Psoas muscle (tissue), 8 donors: ENCODE measurements at regions of chr1 and their contacts with region 1.

Region 1: GRCh38 chr1:51616901-51617708 is at the start of gene OSBPL9:
- DNase-seq: peak; percentile 89 to 94
- ATAC-seq: peak; percentile 81 to 89 (median 82)
- H3K4me3 ChIP-seq: peak within 1 kb of the TSS; percentile 90
- H3K27ac ChIP-seq: peak within 1 kb of the TSS; percentile 97
- H3K4me1 ChIP-seq: peaks cover 43% of the 10 kb centered on the region
- H3K27me3 ChIP-seq: no peaks in the 10 kb centered on the region
- CTCF ChIP-seq: no peak
- total RNA-seq, gene OSBPL9: 32.5 to 141 (median 52.0) TPM

Region 2: GRCh38 chr1:51423073-51423821 is 193.9 kb before region 1 on chr1:
- intact Hi-C with region 1: no loop called
- DNase-seq: no peak
- ATAC-seq: peak in 1 of 4 donors; percentile 30
- H3K4me3 ChIP-seq: no peak overlapping the region
- H3K27ac ChIP-seq: peak overlapping the region; percentile 10
- H3K4me1 ChIP-seq: peaks cover 10% of the 10 kb centered on the region
- H3K27me3 ChIP-seq: no peaks in the 10 kb centered on the region
- CTCF ChIP-seq: no peak

Region 3: DNA sequence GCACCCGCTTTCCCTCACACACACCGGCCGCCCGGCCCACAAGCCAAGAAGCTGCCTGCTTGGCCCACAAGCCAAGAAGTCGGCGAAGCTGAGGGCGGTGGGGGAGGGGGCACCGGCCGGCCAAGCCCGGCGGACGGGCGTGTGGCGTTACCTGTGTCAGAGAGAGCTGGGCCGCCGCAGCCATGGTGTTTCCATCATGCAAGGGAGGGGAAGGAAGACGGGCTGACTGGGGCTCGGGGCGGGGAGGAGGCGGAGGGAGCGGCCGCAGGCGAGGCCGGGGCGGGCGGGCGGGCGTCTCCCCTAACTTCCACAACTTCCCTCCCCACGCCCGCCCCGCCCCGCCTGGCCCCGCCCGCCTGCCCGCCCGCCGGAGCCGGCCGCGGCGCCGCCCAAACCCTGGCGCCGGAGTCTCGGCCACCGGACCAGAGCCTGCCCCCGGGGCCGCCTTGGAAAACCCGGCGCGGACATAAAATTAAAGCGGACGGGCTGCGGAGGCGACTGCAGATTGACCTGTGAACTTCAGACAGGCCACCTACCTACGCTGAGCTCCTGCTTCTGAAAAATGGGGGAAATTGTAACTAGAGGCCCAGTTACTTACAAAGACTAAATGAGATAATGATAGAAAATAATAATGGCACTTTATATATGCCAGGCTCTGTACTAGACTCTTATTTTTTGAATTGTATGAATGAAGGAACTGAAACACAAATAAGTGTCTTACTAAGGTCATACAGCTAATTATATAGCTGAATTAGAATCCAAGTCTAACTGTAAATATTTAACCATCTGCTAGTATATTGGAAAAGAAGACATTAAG is 97.8 kb before region 1 on chr1 and contains the start of gene EPS15:
- intact Hi-C with region 1: loop called (anchors 5 kb)
- DNase-seq: peak; percentile 90 to 94
- ATAC-seq: peak; percentile 77 to 84 (median 80)
- H3K4me3 ChIP-seq: peak within 1 kb of the TSS; percentile 83
- H3K27ac ChIP-seq: peak within 1 kb of the TSS; percentile 96
- H3K4me1 ChIP-seq: peaks cover 36% of the 10 kb centered on the region
- H3K27me3 ChIP-seq: no peaks in the 10 kb centered on the region
- CTCF ChIP-seq: no peak
- total RNA-seq, gene EPS15: 42.6 to 71.9 (median 54.1) TPM

Region 4: GRCh38 chr1:51564124-51564523 is 53.0 kb before region 1 on chr1:
- intact Hi-C with region 1: loop called in 1 of 2 experiments (anchors 5 kb)
- DNase-seq: no peak
- ATAC-seq: no peak
- H3K4me3 ChIP-seq: no peak overlapping the region
- H3K27ac ChIP-seq: peak overlapping the region; percentile 53
- H3K4me1 ChIP-seq: peaks cover 60% of the 10 kb centered on the region
- H3K27me3 ChIP-seq: no peaks in the 10 kb centered on the region
- CTCF ChIP-seq: no peak

Region 5: GRCh38 chr1:51661081-51661518 is 44.0 kb after region 1 on chr1:
- intact Hi-C with region 1: loop called (anchors 5 kb)
- DNase-seq: no peak
- ATAC-seq: peak; percentile 83 to 90 (median 83)
- H3K4me3 ChIP-seq: no peak overlapping the region
- H3K27ac ChIP-seq: peak overlapping the region; percentile 75
- H3K4me1 ChIP-seq: peaks cover 88% of the 10 kb centered on the region
- H3K27me3 ChIP-seq: no peaks in the 10 kb centered on the region
- CTCF ChIP-seq: no peak

Region 6: DNA sequence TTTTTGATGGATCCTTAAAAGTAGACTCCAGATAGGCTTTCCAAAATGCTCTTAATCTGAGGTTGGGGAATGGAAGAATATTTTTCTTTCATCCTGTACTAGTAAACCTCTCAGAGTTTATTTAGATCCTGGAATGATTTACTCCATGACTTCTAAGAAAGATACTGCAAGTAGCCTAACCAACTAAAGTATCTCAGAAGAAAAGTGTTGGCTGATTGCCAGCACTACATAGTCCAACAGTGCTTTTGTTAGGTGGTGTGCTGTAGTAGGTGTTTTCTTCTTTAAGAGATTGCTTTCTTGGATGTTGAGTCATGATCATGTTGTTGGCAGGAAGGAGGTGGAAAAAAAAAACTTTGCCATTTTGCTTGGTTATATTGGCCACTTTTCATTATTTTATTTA is 119.6 kb after region 1 on chr1:
- intact Hi-C with region 1: loop called in 1 of 2 experiments (anchors 5 kb)
- DNase-seq: no peak
- ATAC-seq: peak; percentile 70 to 83 (median 80)
- H3K4me3 ChIP-seq: peak overlapping the region; percentile 13
- H3K27ac ChIP-seq: peak overlapping the region; percentile 79
- H3K4me1 ChIP-seq: peaks cover 78% of the 10 kb centered on the region
- H3K27me3 ChIP-seq: no peaks in the 10 kb centered on the region
- CTCF ChIP-seq: no peak